ENCODE measurements at regions of chr9 and their contacts with region 1.

Region 1: DNA sequence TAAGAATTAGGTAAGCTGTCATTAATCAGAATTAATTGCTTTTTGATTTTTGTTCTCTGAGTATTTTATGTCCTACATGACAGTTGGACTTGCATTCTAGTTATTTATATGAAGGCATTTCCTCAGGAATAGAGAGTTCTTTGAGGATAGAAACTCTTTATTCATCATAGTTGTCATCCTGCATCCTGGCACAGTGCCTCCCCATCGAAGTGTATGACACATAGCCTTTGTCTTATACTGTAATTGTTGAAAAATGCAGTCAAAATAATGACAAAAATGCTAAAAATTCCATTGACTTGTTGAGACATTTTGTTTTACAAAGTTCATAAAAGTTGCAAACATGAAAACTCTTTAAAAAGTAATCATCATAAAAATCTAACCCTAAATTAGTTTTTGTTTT is 36.5 kb downstream of the CFAP95 start:
- DNase-seq: no peak
- H3K4me3 ChIP-seq: no peak overlapping the region
- H3K27ac ChIP-seq: no peak overlapping the region
- H3K4me1 ChIP-seq: no peaks in the 10 kb centered on the region
- H3K27me3 ChIP-seq: no peaks in the 10 kb centered on the region
- CTCF ChIP-seq: no peak

Region 2: DNA sequence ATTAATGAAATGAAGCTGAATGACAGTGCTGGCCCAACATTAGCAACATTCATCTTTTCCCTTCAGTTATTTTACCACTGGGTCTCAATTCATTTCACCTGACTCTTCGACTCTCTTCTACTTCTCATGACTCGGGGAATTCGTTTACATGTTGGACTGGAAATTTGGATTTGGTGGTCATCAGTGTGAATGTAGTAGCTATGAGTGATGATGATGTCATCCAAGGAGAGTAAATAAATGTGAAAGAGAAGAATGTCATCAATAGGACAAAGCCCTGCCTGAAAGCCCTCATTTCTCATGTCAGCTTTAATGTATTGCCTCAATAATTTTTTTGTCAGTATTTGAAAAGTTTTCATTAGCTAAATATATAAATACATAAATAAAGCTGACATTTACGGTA is 58.4 kb before region 1 on chr9:
- CTCF ChIA-PET with region 1: no interaction called
- POLR2A ChIA-PET with region 1: no interaction called
- intact Hi-C with region 1: loop called (anchors 10 kb)
- DNase-seq: no peak
- H3K4me3 ChIP-seq: no peak overlapping the region
- H3K27ac ChIP-seq: no peak overlapping the region
- H3K4me1 ChIP-seq: no peaks in the 10 kb centered on the region
- H3K27me3 ChIP-seq: no peaks in the 10 kb centered on the region
- CTCF ChIP-seq: no peak

Measured in PC-9 (cell line).